Right lobe of liver (tissue), 6 donors: ENCODE measurements at regions of chr20 and their contacts with region 1.

Region 1: GRCh38 chr20:2865630-2866029 is 7.7 kb upstream of the PTPRA start:
- DNase-seq: no peak
- ATAC-seq: peak in 1 of 4 donors; percentile 28
- H3K4me3 ChIP-seq: no peak overlapping the region
- H3K27ac ChIP-seq: no peak overlapping the region
- H3K4me1 ChIP-seq: no peaks in the 10 kb centered on the region
- H3K27me3 ChIP-seq: no peaks in the 10 kb centered on the region
- CTCF ChIP-seq: peak in 1 of 4 donors; percentile 15
- POLR2A ChIP-seq: no peak

Region 2: DNA sequence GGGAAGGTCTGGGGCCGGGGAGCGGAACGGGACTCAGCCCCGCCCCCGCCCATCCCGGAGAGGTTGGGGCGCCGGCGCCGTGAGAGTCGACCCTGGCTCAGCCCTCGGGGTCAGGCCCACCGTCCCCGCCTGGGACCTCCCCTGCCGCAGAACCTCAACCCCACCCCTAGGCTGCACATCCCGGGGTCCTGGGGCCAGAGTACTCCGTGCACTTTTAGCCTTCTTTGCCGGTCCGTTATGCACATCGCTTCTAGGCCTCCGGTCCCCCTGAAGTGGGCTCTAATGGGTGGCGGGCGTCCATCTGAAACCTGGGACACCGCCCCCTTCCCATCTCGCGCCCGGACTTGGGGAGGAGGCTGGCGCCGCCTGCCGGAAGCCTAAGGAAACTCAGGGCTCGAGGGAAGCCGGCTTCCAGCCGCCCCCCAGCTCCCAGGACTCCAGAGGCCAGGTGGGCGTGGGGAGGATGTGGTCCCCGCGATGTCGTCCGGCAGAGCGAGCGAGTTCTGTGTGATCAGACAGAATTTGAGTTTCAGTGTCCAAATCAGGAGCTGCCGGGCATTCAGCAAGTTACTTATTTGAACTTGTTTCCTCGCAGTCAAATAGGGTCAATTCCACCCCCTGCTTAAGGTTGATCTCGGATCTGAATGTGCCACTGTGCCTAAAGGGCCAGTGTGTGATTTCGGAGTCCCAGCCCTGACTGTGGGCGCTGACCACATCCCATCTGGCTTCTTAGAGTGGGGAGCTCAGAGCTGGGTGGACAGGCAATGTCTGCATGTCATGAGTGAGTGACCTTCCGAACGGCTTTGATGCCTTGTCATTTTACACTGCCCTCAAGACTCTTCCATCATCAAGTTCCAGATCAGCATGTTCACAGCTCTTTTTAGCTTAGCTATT is 112.8 kb before region 1 on chr20:
- intact Hi-C with region 1: loop called in 1 of 2 experiments (anchors 10 kb)
- DNase-seq: peak in 2 of 3 donors; percentile 45 to 48
- ATAC-seq: no peak
- H3K4me3 ChIP-seq: peak overlapping the region; percentile 38 to 64 (median 55)
- H3K27ac ChIP-seq: no peak overlapping the region
- H3K4me1 ChIP-seq: peaks cover 0 to 24% (median 4%) of the 10 kb centered on the region in 4 donors
- H3K27me3 ChIP-seq: no peaks in the 10 kb centered on the region
- CTCF ChIP-seq: peak; percentile 27 to 52 (median 49)
- POLR2A ChIP-seq: no peak

Region 3: DNA sequence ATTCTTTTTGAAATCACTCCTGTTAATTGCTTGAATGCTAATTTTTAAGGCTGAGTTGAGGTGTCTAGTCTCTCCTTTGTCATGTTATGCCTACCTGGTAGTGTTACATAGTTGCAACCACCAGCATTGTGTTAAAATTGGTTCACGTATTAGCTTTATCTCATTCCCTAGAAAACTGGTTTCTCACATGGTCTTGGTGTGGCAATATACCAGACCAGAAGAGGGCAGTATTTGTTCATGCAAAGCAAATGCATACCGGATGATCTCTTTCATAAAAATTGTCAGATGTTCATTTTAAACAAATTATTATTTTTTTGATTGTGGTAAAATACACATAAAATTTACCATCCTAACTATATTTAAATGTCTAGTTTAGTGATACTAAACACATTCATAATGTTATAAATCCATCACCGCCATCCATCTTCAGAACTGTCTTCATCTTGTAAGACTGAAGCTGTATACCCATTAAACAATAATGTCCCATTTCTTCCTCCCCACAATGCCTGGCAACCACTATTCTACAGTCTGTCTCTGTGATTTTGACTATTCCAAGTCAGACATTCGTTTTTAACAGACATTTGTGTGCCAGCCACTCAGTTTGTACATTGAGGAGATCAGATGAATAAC is 698.0 kb after region 1 on chr20:
- intact Hi-C with region 1: no loop called
- DNase-seq: no peak
- ATAC-seq: peak; percentile 79 to 82 (median 80)
- H3K4me3 ChIP-seq: no peak overlapping the region
- H3K27ac ChIP-seq: no peak overlapping the region
- H3K4me1 ChIP-seq: no peaks in the 10 kb centered on the region
- H3K27me3 ChIP-seq: no peaks in the 10 kb centered on the region
- CTCF ChIP-seq: peak; percentile 54 to 80 (median 74)
- POLR2A ChIP-seq: no peak